Naive thymus-derived CD4-positive, alpha-beta T cell (primary cell): ENCODE measurements at regions of chr2 and their contacts with region 1.

Region 1: DNA sequence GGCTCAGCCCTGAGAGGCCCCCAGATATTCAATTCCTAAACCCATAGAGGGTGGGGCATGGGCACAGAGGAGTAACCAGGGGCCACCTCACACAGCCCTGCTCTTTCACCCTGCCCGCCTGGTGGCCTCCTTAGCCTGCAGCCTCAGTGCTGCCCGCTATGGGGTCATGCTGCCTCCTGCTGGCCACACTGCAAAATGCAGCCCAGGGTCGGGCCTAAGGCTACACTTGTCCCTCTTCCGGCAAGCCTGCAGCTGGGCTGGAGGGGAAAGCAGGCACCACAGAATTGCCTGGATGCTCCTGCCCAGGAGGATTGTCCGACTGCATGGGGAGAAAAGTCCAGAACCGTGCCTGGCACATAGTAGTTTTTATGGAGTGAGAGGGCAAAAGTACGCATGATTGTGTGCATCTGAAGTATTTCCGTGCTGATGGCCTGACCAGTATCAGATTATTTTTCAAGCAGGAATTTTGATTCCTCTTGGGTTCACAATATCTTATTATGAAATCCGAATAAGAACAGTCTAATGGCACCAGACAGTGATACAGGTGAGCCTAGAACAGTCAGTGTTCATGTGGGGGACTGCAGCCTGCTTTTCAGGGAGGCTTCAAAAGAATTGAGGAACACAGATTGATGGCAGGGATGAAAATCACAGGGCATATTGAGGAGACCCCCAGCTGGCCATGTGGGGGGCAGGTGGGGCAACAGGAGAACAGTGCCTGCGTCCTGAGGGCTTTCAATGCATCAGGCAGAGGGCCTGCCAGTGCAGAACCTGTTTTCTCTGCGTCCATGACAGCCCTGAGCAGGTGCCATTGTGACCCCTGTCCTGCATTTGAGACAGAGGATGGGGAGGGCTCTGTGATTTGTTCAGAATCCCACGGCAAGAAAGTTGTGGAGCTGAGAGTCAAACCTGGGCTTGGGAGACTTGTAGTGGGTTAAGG is 51.2 kb upstream of the ALPP start:
- DNase-seq: peak; percentile 72 to 94 (median 80)
- ATAC-seq: peak; percentile 91
- H3K4me3 ChIP-seq: no peak overlapping the region
- H3K4me3 Mint-ChIP-seq: no peak overlapping the region
- H3K27ac ChIP-seq: no peak overlapping the region
- H3K27ac Mint-ChIP-seq: peak overlapping the region in 1 of 9 donors; percentile 32
- H3K4me1 ChIP-seq: peaks cover 7 to 11% of the 10 kb centered on the region in 2 donors
- H3K4me1 Mint-ChIP-seq: peaks cover 8 to 25% (median 13%) of the 10 kb centered on the region in 7 donors
- H3K27me3 ChIP-seq: no peaks in the 10 kb centered on the region
- H3K27me3 Mint-ChIP-seq: no peaks in the 10 kb centered on the region

Region 2: DNA sequence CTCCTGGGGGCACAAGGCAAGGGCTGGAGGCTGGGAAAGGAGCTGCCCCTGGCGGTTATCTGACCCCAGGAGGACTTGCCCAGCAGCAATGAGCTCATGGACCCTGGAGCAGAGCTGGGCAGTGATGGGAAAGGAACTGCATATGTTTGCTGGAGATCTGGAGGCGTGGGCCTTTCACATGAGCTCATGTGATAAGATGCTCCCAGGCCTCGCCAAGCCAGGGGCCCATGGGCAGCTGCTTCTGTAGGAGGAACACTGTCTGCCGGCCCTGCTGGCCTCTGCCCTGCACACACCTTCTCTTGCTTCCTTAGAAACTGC is 392.2 kb before region 1 on chr2:
- CTCF ChIA-PET with region 1: no interaction called
- POLR2A ChIA-PET with region 1: no interaction called
- intact Hi-C with region 1: no loop called
- DNase-seq: no peak
- ATAC-seq: no peak
- H3K4me3 ChIP-seq: no peak overlapping the region
- H3K4me3 Mint-ChIP-seq: no peak overlapping the region
- H3K27ac ChIP-seq: no peak overlapping the region
- H3K27ac Mint-ChIP-seq: no peak overlapping the region
- H3K4me1 ChIP-seq: no peaks in the 10 kb centered on the region
- H3K4me1 Mint-ChIP-seq: no peaks in the 10 kb centered on the region
- H3K27me3 ChIP-seq: no peaks in the 10 kb centered on the region
- H3K27me3 Mint-ChIP-seq: peaks cover 0 to 7% (median 0%) of the 10 kb centered on the region in 5 donors

Region 3: DNA sequence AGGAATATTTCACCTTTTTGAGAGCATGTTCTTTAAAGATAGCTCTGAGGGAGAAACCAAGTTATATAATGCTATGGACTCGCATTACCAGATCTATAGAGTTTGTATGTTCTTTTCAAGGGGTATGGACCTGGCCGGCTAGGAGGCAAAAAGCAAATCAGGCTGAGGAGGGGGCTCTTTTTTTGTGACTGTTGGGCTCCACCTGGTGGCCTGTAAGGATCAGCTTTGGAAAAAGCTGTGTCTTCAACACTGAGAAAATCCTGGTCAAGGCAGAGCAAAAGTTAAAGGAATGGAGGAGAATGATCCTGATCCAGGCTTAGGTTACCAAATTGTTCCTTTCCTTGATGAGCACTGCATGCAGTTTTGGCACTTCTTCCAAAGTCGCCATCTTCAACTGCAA is 185.3 kb before region 1 on chr2:
- CTCF ChIA-PET with region 1: interaction called, 6 read pairs
- POLR2A ChIA-PET with region 1: no interaction called
- intact Hi-C with region 1: loop called (anchors 1 to 5 kb)
- DNase-seq: peak in 4 of 9 donors; percentile 22 to 41 (median 30)
- ATAC-seq: no peak
- H3K4me3 ChIP-seq: no peak overlapping the region
- H3K4me3 Mint-ChIP-seq: no peak overlapping the region
- H3K27ac ChIP-seq: no peak overlapping the region
- H3K27ac Mint-ChIP-seq: peak overlapping the region in 1 of 9 donors; percentile 72
- H3K4me1 ChIP-seq: peaks cover 0 to 29% of the 10 kb centered on the region in 2 donors
- H3K4me1 Mint-ChIP-seq: peaks cover 15 to 47% (median 41%) of the 10 kb centered on the region in 7 donors
- H3K27me3 ChIP-seq: no peaks in the 10 kb centered on the region
- H3K27me3 Mint-ChIP-seq: no peaks in the 10 kb centered on the region

Region 4: GRCh38 chr2:232230557-232230956 is 96.8 kb before region 1 on chr2:
- CTCF ChIA-PET with region 1: interaction called, 3 read pairs
- POLR2A ChIA-PET with region 1: no interaction called
- intact Hi-C with region 1: loop called in 1 of 2 experiments (anchors 10 kb)
- DNase-seq: no peak
- ATAC-seq: no peak
- H3K4me3 ChIP-seq: no peak overlapping the region
- H3K4me3 Mint-ChIP-seq: no peak overlapping the region
- H3K27ac ChIP-seq: no peak overlapping the region
- H3K27ac Mint-ChIP-seq: peak overlapping the region in 1 of 9 donors; percentile 39
- H3K4me1 ChIP-seq: no peaks in the 10 kb centered on the region
- H3K4me1 Mint-ChIP-seq: peaks cover 12 to 39% (median 24%) of the 10 kb centered on the region in 7 donors
- H3K27me3 ChIP-seq: no peaks in the 10 kb centered on the region
- H3K27me3 Mint-ChIP-seq: no peaks in the 10 kb centered on the region

Region 5: GRCh38 chr2:232292395-232293154 is 34.8 kb before region 1 on chr2:
- CTCF ChIA-PET with region 1: interaction called, 4 read pairs
- POLR2A ChIA-PET with region 1: no interaction called
- intact Hi-C with region 1: loop called (anchors 1 to 5 kb)
- DNase-seq: peak in 3 of 9 donors; percentile 28 to 50 (median 31)
- ATAC-seq: peak; percentile 71
- H3K4me3 ChIP-seq: no peak overlapping the region
- H3K4me3 Mint-ChIP-seq: no peak overlapping the region
- H3K27ac ChIP-seq: no peak overlapping the region
- H3K27ac Mint-ChIP-seq: peak overlapping the region in 4 of 9 donors; percentile 7 to 35 (median 8)
- H3K4me1 ChIP-seq: peaks cover 0 to 3% of the 10 kb centered on the region in 2 donors
- H3K4me1 Mint-ChIP-seq: peaks cover 6 to 27% (median 20%) of the 10 kb centered on the region in 7 donors
- H3K27me3 ChIP-seq: no peaks in the 10 kb centered on the region
- H3K27me3 Mint-ChIP-seq: no peaks in the 10 kb centered on the region

Region 6: GRCh38 chr2:232315049-232315922 is 12.1 kb before region 1 on chr2:
- CTCF ChIA-PET with region 1: interaction called, 10 read pairs
- POLR2A ChIA-PET with region 1: interaction called, 7 read pairs
- intact Hi-C with region 1: loop called in 1 of 2 experiments (anchors 1 kb)
- DNase-seq: peak; percentile 31 to 78 (median 70)
- ATAC-seq: peak; percentile 91
- H3K4me3 ChIP-seq: peak overlapping the region; percentile 25
- H3K4me3 Mint-ChIP-seq: peak overlapping the region; percentile 66 to 88 (median 78)
- H3K27ac ChIP-seq: peak overlapping the region; percentile 62
- H3K27ac Mint-ChIP-seq: peak overlapping the region; percentile 90 to 97 (median 92)
- H3K4me1 ChIP-seq: peaks cover 64 to 77% of the 10 kb centered on the region in 2 donors
- H3K4me1 Mint-ChIP-seq: peaks cover 62 to 100% (median 94%) of the 10 kb centered on the region in 7 donors
- H3K27me3 ChIP-seq: no peaks in the 10 kb centered on the region
- H3K27me3 Mint-ChIP-seq: no peaks in the 10 kb centered on the region

Region 7: DNA sequence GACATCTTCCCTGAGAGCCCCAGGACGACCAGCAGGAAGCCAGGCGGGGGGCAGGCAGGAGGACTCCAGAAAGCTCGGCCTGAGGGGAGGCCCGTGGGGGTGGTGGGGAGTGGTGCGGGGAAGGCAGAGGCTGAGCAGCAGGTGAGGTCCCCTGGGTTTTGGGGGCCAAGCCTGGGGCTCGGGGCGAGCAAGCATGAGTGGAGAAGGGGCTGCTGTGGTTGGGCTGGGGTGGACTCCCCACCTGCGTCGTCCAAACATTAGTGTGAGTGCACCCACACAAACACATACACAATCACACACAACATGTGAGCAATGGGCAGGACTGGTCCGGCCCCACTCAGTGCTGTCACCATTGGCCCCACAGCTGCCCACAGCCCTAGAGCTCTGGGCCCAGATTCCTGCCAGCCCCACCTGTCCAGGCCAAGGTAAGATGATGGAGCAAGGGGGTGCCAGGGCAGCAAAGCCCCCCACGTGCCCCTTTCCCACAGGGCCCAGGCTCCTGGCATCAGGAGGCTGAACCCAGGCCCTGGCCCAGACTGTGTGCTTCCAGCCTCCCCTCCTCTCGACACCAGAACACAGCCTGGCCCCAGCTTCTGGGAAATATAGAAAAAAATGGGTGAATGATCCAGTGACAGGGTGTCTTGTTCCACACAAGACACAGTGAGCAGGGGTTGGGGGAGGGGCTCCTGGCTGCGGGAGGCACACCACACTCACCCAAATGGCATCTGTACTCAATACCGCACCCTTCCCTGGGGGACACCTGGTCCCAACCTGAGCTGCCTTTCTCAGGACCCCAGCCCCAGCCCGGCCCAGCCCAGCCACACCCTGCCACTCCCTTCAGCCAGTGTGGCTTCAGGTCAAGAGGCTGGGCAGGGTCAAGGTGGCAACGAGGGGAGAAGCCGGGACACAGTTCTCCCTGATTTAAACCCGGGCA is 50.7 kb after region 1 on chr2:
- CTCF ChIA-PET with region 1: no interaction called
- POLR2A ChIA-PET with region 1: no interaction called
- intact Hi-C with region 1: no loop called
- DNase-seq: no peak
- ATAC-seq: no peak
- H3K4me3 ChIP-seq: no peak overlapping the region
- H3K4me3 Mint-ChIP-seq: no peak overlapping the region
- H3K27ac ChIP-seq: no peak overlapping the region
- H3K27ac Mint-ChIP-seq: no peak overlapping the region
- H3K4me1 ChIP-seq: no peaks in the 10 kb centered on the region
- H3K4me1 Mint-ChIP-seq: no peaks in the 10 kb centered on the region
- H3K27me3 ChIP-seq: no peaks in the 10 kb centered on the region
- H3K27me3 Mint-ChIP-seq: peaks cover 4 to 13% (median 10%) of the 10 kb centered on the region in 5 donors

Region 8: GRCh38 chr2:232438951-232439757 is 111.8 kb after region 1 on chr2:
- CTCF ChIA-PET with region 1: interaction called, 4 read pairs
- POLR2A ChIA-PET with region 1: no interaction called
- intact Hi-C with region 1: loop called in 1 of 2 experiments (anchors 1 kb)
- DNase-seq: peak in 5 of 9 donors; percentile 20 to 54 (median 28)
- ATAC-seq: peak; percentile 52
- H3K4me3 ChIP-seq: no peak overlapping the region
- H3K4me3 Mint-ChIP-seq: no peak overlapping the region
- H3K27ac ChIP-seq: no peak overlapping the region
- H3K27ac Mint-ChIP-seq: no peak overlapping the region
- H3K4me1 ChIP-seq: no peaks in the 10 kb centered on the region
- H3K4me1 Mint-ChIP-seq: peaks cover 0 to 8% (median 3%) of the 10 kb centered on the region in 7 donors
- H3K27me3 ChIP-seq: no peaks in the 10 kb centered on the region
- H3K27me3 Mint-ChIP-seq: peaks cover 0 to 5% (median 0%) of the 10 kb centered on the region in 5 donors